ENCODE measurements at regions of chr14 and their contacts with region 1.

Region 1: GRCh38 chr14:24299255-24300195 is at the starts of genes DHRS1 and NOP9:
- DNase-seq: peak; percentile 94
- H3K4me3 Mint-ChIP-seq: peak within 1 kb of the TSS; percentile 87
- H3K27ac Mint-ChIP-seq: peak within 1 kb of the TSS; percentile 89
- H3K4me1 Mint-ChIP-seq: peaks cover 47% of the 10 kb centered on the region
- H3K27me3 Mint-ChIP-seq: no peaks in the 10 kb centered on the region
- total RNA-seq, gene DHRS1: 11.8 to 13.8 TPM
- total RNA-seq, gene NOP9: 24.8 to 26.4 TPM

Region 2: DNA sequence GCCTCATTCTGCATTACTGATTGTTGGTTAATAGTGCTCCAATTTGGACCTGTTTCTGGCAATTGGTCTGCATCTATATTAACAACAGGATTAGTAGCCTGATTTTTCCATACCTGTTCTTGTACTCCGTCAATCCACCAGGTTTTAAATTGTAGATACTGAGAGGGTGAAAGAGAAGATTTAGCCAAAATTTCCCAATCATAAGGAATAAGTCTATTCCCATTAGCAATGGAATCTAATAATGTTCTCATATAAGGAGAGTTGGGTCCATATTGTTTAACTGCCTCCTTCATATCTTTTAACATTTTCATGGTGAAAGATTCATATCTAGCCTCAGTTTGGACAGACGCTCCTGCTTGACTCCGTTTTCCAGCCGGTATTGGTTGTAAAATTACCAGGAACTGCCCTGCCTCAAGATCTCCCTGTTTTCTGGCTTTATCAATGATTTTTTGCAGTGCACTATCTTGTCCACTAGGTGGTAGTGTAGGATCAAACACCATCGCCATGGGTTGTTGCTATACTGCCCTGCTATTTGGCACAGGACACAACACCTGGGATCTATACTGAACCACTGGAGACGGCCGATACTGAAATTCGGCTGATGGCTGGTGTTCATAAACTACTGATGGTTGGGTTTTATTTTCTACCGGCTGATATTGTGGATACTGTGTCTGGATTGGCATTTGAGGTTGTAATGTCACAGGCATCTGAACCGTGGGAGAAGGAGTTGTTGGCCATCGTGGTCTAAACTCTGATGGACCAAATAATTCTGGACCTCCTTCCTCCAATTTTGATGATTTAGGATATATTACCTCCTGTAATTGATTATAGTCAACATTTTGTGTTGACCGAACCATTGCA is 285.6 kb before region 1 on chr14:
- CTCF ChIA-PET with region 1: no interaction called
- intact Hi-C with region 1: loop called (anchors 2 kb)
- DNase-seq: peak; percentile 66
- H3K4me3 Mint-ChIP-seq: no peak overlapping the region
- H3K27ac Mint-ChIP-seq: no peak overlapping the region
- H3K4me1 Mint-ChIP-seq: peaks cover 25% of the 10 kb centered on the region
- H3K27me3 Mint-ChIP-seq: no peaks in the 10 kb centered on the region

Region 3: GRCh38 chr14:24146978-24147760 is 152.4 kb before region 1 on chr14 and contains the start of gene RNF31:
- CTCF ChIA-PET with region 1: interaction called, 3 read pairs
- intact Hi-C with region 1: loop called (anchors 2 kb)
- DNase-seq: peak; percentile 99
- H3K4me3 Mint-ChIP-seq: peak within 1 kb of the TSS; percentile 97
- H3K27ac Mint-ChIP-seq: peak within 1 kb of the TSS; percentile 99
- H3K4me1 Mint-ChIP-seq: peaks cover 54% of the 10 kb centered on the region
- H3K27me3 Mint-ChIP-seq: no peaks in the 10 kb centered on the region
- total RNA-seq, gene RNF31: 51.1 to 53.8 TPM

Region 4: DNA sequence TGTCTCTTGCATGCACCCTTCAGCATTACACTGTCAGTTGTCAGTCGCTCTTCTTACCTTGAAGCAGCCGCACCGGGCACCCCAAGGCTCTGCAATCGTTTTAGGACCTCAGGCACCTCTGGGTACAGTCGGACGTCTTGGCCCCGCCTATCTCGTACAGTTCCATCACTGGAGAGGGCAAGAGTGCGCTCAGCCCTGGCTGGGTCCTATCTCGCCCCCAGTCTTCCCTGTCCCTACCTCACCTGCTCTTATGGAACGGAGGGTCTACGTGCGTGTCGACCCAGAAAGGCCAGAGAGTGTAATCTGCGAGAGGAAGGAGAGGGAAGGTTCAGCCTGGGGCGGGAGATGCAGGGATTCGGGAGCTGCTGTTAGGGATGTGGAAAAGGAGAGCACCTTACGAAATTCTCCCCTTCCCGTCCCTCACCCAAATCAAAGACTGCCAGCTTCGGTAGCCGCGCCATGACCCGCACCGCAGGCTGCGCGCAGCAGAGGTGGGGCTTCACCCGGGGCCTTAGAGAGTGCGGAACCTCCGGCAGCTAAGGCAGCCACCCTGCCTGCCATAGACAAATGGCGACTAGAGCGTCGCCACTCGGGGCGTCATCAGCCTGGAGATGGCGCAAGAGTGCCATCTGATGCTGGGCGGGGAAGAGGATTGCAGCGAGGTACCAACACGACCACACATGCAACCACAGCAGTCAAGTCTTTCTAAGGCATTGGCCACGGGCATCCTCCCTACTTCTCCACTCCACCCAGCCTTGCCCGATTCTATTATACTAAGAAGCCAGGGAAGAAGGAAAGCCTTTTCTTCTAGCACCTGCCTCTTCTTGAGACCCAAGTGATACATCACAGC is 83.8 kb before region 1 on chr14 and contains the start of gene MDP1:
- CTCF ChIA-PET with region 1: interaction called, 64 read pairs
- intact Hi-C with region 1: loop called (anchors 1 kb)
- DNase-seq: peak; percentile 93
- H3K4me3 Mint-ChIP-seq: peak within 1 kb of the TSS; percentile 86
- H3K27ac Mint-ChIP-seq: peak within 1 kb of the TSS; percentile 96
- H3K4me1 Mint-ChIP-seq: peaks cover 45% of the 10 kb centered on the region
- H3K27me3 Mint-ChIP-seq: no peaks in the 10 kb centered on the region
- total RNA-seq, gene MDP1: 10.2 to 13.6 TPM

Region 5: GRCh38 chr14:24251880-24252288 is 47.6 kb before region 1 on chr14:
- CTCF ChIA-PET with region 1: interaction called, 310 read pairs
- intact Hi-C with region 1: no loop called
- DNase-seq: no peak
- H3K4me3 Mint-ChIP-seq: no peak overlapping the region
- H3K27ac Mint-ChIP-seq: no peak overlapping the region
- H3K4me1 Mint-ChIP-seq: peaks cover 25% of the 10 kb centered on the region
- H3K27me3 Mint-ChIP-seq: no peaks in the 10 kb centered on the region

Region 6: GRCh38 chr14:24310646-24311604 is 11.4 kb after region 1 on chr14 and contains the start of gene LTB4R:
- CTCF ChIA-PET with region 1: interaction called, 65 read pairs
- intact Hi-C with region 1: loop called (anchors 1 kb)
- DNase-seq: peak; percentile 71
- H3K4me3 Mint-ChIP-seq: peak within 1 kb of the TSS; percentile 71
- H3K27ac Mint-ChIP-seq: peak within 1 kb of the TSS; percentile 68
- H3K4me1 Mint-ChIP-seq: peaks cover 64% of the 10 kb centered on the region
- H3K27me3 Mint-ChIP-seq: no peaks in the 10 kb centered on the region
- total RNA-seq, gene LTB4R: 10.6 to 11.4 TPM

Measured in activated naive CD4-positive, alpha-beta T cell treated with anti-CD3 and anti-CD28 coated beads for 36 hours (primary cell).